Activated naive CD4-positive, alpha-beta T cell treated with anti-CD3 and anti-CD28 coated beads for 36 hours (primary cell): ENCODE measurements at regions of chr1 and their contacts with region 1.

Region 1: DNA sequence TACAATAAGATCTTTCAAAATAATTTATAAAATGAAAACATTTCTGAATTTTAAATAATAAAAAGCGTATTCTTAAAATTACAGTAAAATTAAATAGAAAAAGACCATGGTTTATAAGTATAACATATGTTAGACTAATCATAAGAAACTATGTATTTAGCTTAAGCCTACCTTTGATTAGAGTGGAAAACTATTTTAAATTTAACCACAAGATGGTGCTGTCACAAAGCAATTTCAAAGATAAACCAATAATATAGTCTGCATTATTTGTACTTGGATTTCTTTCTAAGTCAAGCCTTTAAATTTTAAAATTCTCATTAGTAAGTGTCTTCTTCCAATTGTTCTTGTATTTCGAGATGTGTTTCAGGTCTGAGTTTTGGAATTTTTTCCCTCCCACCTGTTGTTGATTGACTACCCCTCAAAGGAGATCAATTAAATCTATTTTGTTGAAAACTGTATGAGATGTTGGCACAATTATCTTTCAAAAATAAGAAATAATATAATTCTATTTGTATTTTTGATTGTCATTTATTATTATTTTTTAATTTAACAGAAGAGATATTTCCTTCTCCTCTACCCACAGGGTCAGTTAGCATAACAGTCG is 459.8 kb downstream of the KCNT2 start:
- DNase-seq: no peak
- H3K4me3 Mint-ChIP-seq: no peak overlapping the region
- H3K27ac Mint-ChIP-seq: no peak overlapping the region
- H3K4me1 Mint-ChIP-seq: no peaks in the 10 kb centered on the region
- H3K27me3 Mint-ChIP-seq: no peaks in the 10 kb centered on the region

Region 2: GRCh38 chr1:194684636-194685035 is 1463.8 kb before region 1 on chr1:
- CTCF ChIA-PET with region 1: no interaction called
- intact Hi-C with region 1: no loop called
- DNase-seq: no peak
- H3K4me3 Mint-ChIP-seq: no peak overlapping the region
- H3K27ac Mint-ChIP-seq: no peak overlapping the region
- H3K4me1 Mint-ChIP-seq: no peaks in the 10 kb centered on the region
- H3K27me3 Mint-ChIP-seq: no peaks in the 10 kb centered on the region

Region 3: GRCh38 chr1:196229546-196229945 is 81.1 kb after region 1 on chr1:
- CTCF ChIA-PET with region 1: no interaction called
- intact Hi-C with region 1: no loop called
- DNase-seq: no peak
- H3K4me3 Mint-ChIP-seq: no peak overlapping the region
- H3K27ac Mint-ChIP-seq: no peak overlapping the region
- H3K4me1 Mint-ChIP-seq: no peaks in the 10 kb centered on the region
- H3K27me3 Mint-ChIP-seq: peaks cover 1% of the 10 kb centered on the region

Region 4: GRCh38 chr1:196309386-196309785 is 160.9 kb after region 1 on chr1:
- CTCF ChIA-PET with region 1: no interaction called
- intact Hi-C with region 1: loop called (anchors 2 kb)
- DNase-seq: no peak
- H3K4me3 Mint-ChIP-seq: no peak overlapping the region
- H3K27ac Mint-ChIP-seq: no peak overlapping the region
- H3K4me1 Mint-ChIP-seq: no peaks in the 10 kb centered on the region
- H3K27me3 Mint-ChIP-seq: no peaks in the 10 kb centered on the region

Region 5: DNA sequence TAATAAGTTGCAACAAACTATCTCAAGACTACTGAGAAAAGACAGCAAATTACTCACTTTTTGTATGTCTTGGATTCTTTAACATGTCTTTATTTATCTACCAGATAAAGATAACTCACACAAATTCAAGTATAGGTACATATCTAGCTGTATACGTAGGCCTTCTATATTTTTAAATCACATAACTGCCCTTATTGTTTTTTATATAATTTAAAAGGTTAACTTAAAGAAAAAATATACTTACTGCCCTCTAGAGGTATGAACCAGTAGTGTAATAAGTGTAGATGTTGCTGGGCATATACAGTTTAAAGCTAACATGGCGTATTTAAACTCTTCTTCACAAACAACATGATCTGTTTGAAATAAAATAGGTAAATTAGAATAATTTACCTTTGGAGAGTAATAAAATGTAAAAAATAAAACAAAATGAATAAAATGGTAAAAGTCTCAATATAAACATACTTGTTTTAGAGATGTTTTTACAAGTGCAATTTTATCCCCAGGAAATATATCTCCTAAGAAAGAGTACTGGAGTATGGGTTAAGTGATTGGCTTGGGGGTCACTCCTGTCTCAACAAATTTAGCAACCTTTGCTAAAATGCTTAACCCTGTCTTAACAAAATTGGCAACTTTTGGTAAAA is 224.5 kb after region 1 on chr1:
- CTCF ChIA-PET with region 1: interaction called, 3 read pairs
- intact Hi-C with region 1: loop called (anchors 1 kb)
- DNase-seq: no peak
- H3K4me3 Mint-ChIP-seq: no peak overlapping the region
- H3K27ac Mint-ChIP-seq: no peak overlapping the region
- H3K4me1 Mint-ChIP-seq: no peaks in the 10 kb centered on the region
- H3K27me3 Mint-ChIP-seq: no peaks in the 10 kb centered on the region